HepG2 (cell line): ENCODE measurements at regions of chr15 and their contacts with region 1.

Region 1: DNA sequence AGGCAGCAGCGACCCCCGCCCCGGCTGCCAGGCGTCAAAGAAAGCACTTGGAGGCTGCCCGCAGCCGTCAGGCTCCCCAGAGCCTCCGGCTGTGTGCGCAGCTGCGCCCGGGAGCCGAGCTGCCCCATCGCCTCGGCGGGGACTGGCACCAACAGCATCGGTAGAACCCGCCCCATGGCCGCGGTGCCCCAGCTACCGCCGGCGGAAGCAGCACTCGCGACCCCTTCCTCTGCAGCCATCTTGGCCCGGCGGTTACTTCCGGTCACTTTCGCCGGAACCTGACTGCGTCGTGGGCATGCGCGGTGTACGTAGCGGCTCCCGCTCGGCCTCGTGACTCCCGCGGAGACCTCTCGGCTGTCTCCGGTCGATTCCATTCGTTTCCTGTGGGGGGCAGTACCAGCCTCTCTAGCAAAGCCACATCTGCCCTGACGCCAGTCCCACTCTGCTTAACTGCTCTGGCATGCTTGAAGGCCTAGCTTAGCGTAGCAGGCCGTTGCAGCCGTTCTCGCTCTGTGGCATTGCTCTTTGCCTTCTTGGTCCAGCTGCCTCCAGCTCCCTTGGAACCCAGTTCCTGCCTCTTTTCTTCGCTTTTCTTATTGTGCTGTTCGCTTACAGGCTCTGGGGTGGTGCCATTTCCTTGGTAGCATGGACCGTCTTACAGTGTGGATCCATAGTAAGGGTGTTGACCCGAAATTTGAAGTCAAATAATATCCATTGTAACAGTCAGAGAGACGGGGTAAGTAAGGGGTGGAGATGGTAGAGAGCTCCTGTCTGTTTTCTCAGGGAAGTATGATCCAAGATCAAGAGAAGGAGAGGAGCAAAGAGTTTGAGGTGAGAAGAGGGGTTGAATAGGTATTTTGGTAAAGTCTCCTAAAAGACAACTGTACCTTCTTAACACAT is at the start of gene SPG11:
- DNase-seq: peak; percentile 96
- ATAC-seq: peak; percentile 93
- H3K4me3 ChIP-seq: peak within 1 kb of the TSS; percentile 79 to 87 (median 83)
- H3K27ac ChIP-seq: peak within 1 kb of the TSS; percentile 89
- H3K4me1 ChIP-seq: peaks cover 20% of the 10 kb centered on the region
- H3K27me3 ChIP-seq: no peaks in the 10 kb centered on the region; a peak in 1 of 5 replicates
- CTCF ChIP-seq: peak; percentile 99
- EP300 ChIP-seq: no peak
- POLR2A ChIP-seq: peak; percentile 96
- RAD21 ChIP-seq: peak; percentile 96
- total RNA-seq, gene SPG11: 31.5 and 35.0 TPM in 2 replicates

Region 2: GRCh38 chr15:44516436-44516835 is 147.2 kb before region 1 on chr15:
- CTCF ChIA-PET with region 1: no interaction called
- POLR2A ChIA-PET with region 1: no interaction called
- in situ Hi-C with region 1: no loop called
- intact Hi-C with region 1: no loop called
- DNase-seq: no peak
- ATAC-seq: no peak
- H3K4me3 ChIP-seq: no peak overlapping the region
- H3K27ac ChIP-seq: no peak overlapping the region
- H3K4me1 ChIP-seq: no peaks in the 10 kb centered on the region
- H3K27me3 ChIP-seq: no peaks in the 10 kb centered on the region
- CTCF ChIP-seq: no peak
- EP300 ChIP-seq: no peak
- POLR2A ChIP-seq: no peak
- RAD21 ChIP-seq: no peak

Region 3: DNA sequence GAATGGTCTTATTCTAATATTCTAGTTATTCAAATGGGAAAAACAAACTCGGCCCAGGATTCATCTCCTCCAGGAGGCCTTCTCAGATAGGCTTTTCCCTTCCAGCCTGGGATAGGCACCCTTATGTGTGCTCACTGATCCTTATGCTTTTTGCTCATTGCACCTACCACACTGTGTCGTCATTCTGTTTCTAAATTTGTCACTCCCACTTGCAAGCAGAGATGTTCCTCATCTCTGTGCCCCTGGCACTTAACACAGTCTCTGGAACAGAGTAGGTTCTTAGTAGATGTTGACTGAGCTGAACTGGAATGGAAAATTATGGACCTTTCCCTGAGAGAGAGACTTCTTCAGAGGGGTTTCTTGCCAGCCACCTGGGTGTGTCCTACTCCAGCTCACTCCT is 18.6 kb after region 1 on chr15:
- CTCF ChIA-PET with region 1: no interaction called
- POLR2A ChIA-PET with region 1: interaction called, 16 read pairs
- in situ Hi-C with region 1: no loop called
- intact Hi-C with region 1: no loop called
- DNase-seq: no peak
- ATAC-seq: no peak
- H3K4me3 ChIP-seq: no peak overlapping the region
- H3K27ac ChIP-seq: no peak overlapping the region
- H3K4me1 ChIP-seq: peaks cover 15% of the 10 kb centered on the region
- H3K27me3 ChIP-seq: peaks cover 0 to 1% of the 10 kb centered on the region in 2 experiments; a peak in 2 of 5 replicates
- CTCF ChIP-seq: no peak
- EP300 ChIP-seq: no peak
- POLR2A ChIP-seq: no peak
- RAD21 ChIP-seq: no peak

Region 4: GRCh38 chr15:44711356-44712107 is 47.9 kb after region 1 on chr15 and contains the start of gene B2M:
- CTCF ChIA-PET with region 1: no interaction called
- POLR2A ChIA-PET with region 1: interaction called, 66 read pairs
- in situ Hi-C with region 1: no loop called
- intact Hi-C with region 1: loop called (anchors 2 kb)
- DNase-seq: peak; percentile 92
- ATAC-seq: peak; percentile 97
- H3K4me3 ChIP-seq: peak within 1 kb of the TSS; percentile 85 to 99 (median 96)
- H3K27ac ChIP-seq: peak within 1 kb of the TSS; percentile 96
- H3K4me1 ChIP-seq: peaks cover 36% of the 10 kb centered on the region
- H3K27me3 ChIP-seq: no peaks in the 10 kb centered on the region; a peak in 1 of 5 replicates
- CTCF ChIP-seq: no peak
- EP300 ChIP-seq: 0 out of 4 replicates have a peak, but pooled peaks of 1 of the 2 experiments have one; percentile 7
- POLR2A ChIP-seq: peak; percentile 100
- RAD21 ChIP-seq: no peak
- total RNA-seq, gene B2M: 530 and 784 TPM in 2 replicates

Region 5: GRCh38 chr15:44728576-44729407 is 65.1 kb after region 1 on chr15:
- CTCF ChIA-PET with region 1: no interaction called
- POLR2A ChIA-PET with region 1: interaction called, 115 read pairs
- in situ Hi-C with region 1: no loop called
- intact Hi-C with region 1: loop called (anchors 2 kb)
- DNase-seq: peak; percentile 96
- ATAC-seq: peak; percentile 95
- H3K4me3 ChIP-seq: peak overlapping the region; percentile 68 to 98 (median 85)
- H3K27ac ChIP-seq: peak overlapping the region; percentile 82
- H3K4me1 ChIP-seq: peaks cover 48% of the 10 kb centered on the region
- H3K27me3 ChIP-seq: no peaks in the 10 kb centered on the region
- CTCF ChIP-seq: 0 out of 2 replicates have a peak, but pooled peaks have one; percentile 8
- EP300 ChIP-seq: no peak; a peak in 1 of 4 replicates
- POLR2A ChIP-seq: peak; percentile 60 to 73
- RAD21 ChIP-seq: 0 out of 2 replicates have a peak, but pooled peaks have one; percentile 12

Region 6: GRCh38 chr15:44738340-44738984 is 74.8 kb after region 1 on chr15:
- CTCF ChIA-PET with region 1: interaction called, 20 read pairs
- POLR2A ChIA-PET with region 1: interaction called, 45 read pairs
- in situ Hi-C with region 1: loop called (anchors 5 kb)
- intact Hi-C with region 1: loop called (anchors 1 kb)
- DNase-seq: peak; percentile 47
- ATAC-seq: no peak
- H3K4me3 ChIP-seq: no peak overlapping the region
- H3K27ac ChIP-seq: no peak overlapping the region
- H3K4me1 ChIP-seq: no peaks in the 10 kb centered on the region
- H3K27me3 ChIP-seq: no peaks in the 10 kb centered on the region
- CTCF ChIP-seq: peak; percentile 64
- EP300 ChIP-seq: no peak
- POLR2A ChIP-seq: no peak
- RAD21 ChIP-seq: peak; percentile 52; the same call in 1 of the 2 replicates

Region 7: GRCh38 chr15:44812029-44812517 is 148.4 kb after region 1 on chr15:
- CTCF ChIA-PET with region 1: no interaction called
- POLR2A ChIA-PET with region 1: interaction called, 11 read pairs
- in situ Hi-C with region 1: no loop called
- intact Hi-C with region 1: no loop called
- DNase-seq: peak; percentile 93
- ATAC-seq: peak; percentile 96
- H3K4me3 ChIP-seq: peak overlapping the region in 1 of 3 experiments; percentile 13; a peak in 1 of 6 replicates
- H3K27ac ChIP-seq: peak overlapping the region; percentile 74
- H3K4me1 ChIP-seq: peaks cover 62% of the 10 kb centered on the region
- H3K27me3 ChIP-seq: no peaks in the 10 kb centered on the region
- CTCF ChIP-seq: peak; percentile 64
- EP300 ChIP-seq: peak in 1 of 2 experiments; percentile 81; a peak in 3 of 4 replicates
- POLR2A ChIP-seq: no peak
- RAD21 ChIP-seq: peak; percentile 62; the same call in 1 of the 2 replicates